CD4-positive, alpha-beta memory T cell (primary cell): ENCODE measurements at regions of chr1 and their contacts with region 1.

Region 1: DNA sequence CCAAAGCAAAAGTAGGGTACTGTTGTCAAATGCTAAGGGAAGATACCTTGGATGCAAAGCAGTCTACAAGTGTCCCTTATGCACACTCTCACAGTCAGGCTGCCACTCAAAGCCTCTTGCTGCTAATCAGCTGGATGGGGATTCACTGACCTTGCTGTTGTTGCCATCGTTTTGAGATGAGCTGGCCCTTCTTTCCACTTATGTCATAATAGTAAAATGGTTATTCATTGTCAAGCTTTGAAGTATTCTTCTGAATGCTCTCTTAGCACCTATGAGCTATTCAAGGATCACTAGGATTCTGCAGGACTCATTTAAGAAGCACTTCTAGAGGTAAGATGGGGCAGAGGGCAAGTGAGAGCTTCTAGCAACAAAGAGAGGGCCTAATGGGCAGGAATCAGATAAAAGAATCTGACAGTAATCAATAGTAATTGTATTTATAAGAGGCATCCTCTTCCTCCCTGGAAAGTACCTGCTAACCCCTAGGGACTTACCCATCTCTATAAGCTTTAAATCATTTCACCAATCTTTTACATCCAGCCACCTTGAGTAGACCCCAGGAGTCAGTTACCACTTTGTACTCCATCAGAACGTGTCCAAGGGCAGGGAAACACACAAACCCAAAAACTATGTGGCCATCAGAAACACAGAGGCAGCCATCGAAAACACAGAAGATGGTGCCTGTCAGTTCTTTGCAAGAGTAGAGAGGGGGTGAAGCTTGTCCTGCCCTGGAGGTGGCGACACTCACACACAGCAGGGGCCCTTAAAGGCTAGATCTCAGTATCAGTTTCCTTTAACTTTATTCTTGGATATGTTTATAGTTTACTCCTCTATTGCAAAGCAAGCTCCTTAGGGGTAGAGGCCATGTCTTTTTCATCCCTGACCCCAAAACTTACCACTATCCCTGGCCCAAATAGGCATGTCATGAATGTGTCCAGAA is 103.7 kb upstream of the NFIA start:
- DNase-seq: peak in 4 of 5 donors; percentile 20 to 34 (median 22)
- H3K4me3 ChIP-seq: no peak overlapping the region
- H3K4me3 Mint-ChIP-seq: no peak overlapping the region
- H3K27ac ChIP-seq: no peak overlapping the region
- H3K27ac Mint-ChIP-seq: no peak overlapping the region
- H3K4me1 ChIP-seq: no peaks in the 10 kb centered on the region
- H3K4me1 Mint-ChIP-seq: no peaks in the 10 kb centered on the region
- H3K27me3 ChIP-seq: no peaks in the 10 kb centered on the region
- H3K27me3 Mint-ChIP-seq: peaks cover 2 to 4% of the 10 kb centered on the region in 2 donors

Region 2: GRCh38 chr1:60989749-60990713 is 11.3 kb after region 1 on chr1:
- CTCF ChIA-PET with region 1: interaction called, 18 read pairs
- POLR2A ChIA-PET with region 1: no interaction called
- intact Hi-C with region 1: no loop called
- DNase-seq: no peak
- H3K4me3 ChIP-seq: no peak overlapping the region
- H3K4me3 Mint-ChIP-seq: no peak overlapping the region
- H3K27ac ChIP-seq: no peak overlapping the region
- H3K27ac Mint-ChIP-seq: no peak overlapping the region
- H3K4me1 ChIP-seq: no peaks in the 10 kb centered on the region
- H3K4me1 Mint-ChIP-seq: no peaks in the 10 kb centered on the region
- H3K27me3 ChIP-seq: no peaks in the 10 kb centered on the region
- H3K27me3 Mint-ChIP-seq: peaks cover 2 to 3% of the 10 kb centered on the region in 2 donors

Region 3: GRCh38 chr1:61028136-61028535 is 49.4 kb after region 1 on chr1:
- CTCF ChIA-PET with region 1: no interaction called
- POLR2A ChIA-PET with region 1: no interaction called
- intact Hi-C with region 1: no loop called
- DNase-seq: no peak
- H3K4me3 ChIP-seq: no peak overlapping the region
- H3K4me3 Mint-ChIP-seq: no peak overlapping the region
- H3K27ac ChIP-seq: no peak overlapping the region
- H3K27ac Mint-ChIP-seq: no peak overlapping the region
- H3K4me1 ChIP-seq: no peaks in the 10 kb centered on the region
- H3K4me1 Mint-ChIP-seq: no peaks in the 10 kb centered on the region
- H3K27me3 ChIP-seq: no peaks in the 10 kb centered on the region
- H3K27me3 Mint-ChIP-seq: no peaks in the 10 kb centered on the region

Region 4: DNA sequence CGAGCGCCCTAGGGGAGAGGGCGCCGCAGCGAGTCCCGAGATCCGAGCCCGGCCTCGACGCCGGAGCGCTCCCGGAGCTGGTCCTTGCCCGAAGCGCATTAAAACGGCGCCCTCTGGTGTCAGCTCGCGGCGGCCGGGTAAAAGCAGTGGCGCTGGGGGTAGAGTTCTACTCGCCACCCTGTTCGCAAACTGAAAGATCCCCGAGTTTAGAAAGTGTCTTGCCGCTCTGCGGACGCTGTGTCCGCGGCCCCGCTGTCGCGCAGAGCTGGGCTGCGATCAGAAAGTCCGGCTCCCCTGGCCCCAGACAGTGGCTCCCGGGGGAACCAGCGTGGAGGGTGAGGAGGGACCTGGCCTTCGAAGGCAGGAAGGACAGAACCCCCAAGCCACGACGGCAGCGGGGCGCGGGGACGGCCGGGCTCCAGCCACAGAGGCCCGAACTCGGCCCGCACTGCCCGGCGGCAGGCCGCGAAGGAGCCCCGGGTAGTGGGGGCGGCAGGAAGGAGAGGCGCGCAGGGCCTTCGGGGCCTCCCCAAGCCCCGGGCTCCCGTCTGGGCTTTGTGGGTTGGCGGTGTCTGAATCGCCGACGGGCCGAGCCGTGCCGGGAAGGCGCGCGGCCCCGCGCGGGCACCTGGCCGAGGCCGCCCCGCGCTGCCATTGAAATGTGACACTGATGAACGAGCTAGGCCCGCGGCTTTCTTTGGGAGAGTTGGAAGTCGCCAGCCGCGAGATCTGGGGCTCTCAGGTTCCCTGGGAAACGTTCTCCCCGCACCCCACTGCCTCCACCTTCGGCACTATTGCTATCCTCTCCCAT is 64.5 kb after region 1 on chr1:
- CTCF ChIA-PET with region 1: interaction called, 12 read pairs
- POLR2A ChIA-PET with region 1: no interaction called
- intact Hi-C with region 1: no loop called
- DNase-seq: peak; percentile 73 to 81 (median 76)
- H3K4me3 ChIP-seq: peak overlapping the region in 1 of 2 donors; percentile 43
- H3K4me3 Mint-ChIP-seq: peak overlapping the region; percentile 74 to 88 (median 82)
- H3K27ac ChIP-seq: no peak overlapping the region
- H3K27ac Mint-ChIP-seq: peak overlapping the region in 1 of 7 donors; percentile 48
- H3K4me1 ChIP-seq: peaks cover 6% of the 10 kb centered on the region
- H3K4me1 Mint-ChIP-seq: peaks cover 0 to 7% (median under 1%) of the 10 kb centered on the region in 4 donors
- H3K27me3 ChIP-seq: no peaks in the 10 kb centered on the region
- H3K27me3 Mint-ChIP-seq: peaks cover 20 to 25% of the 10 kb centered on the region in 2 donors

Region 5: DNA sequence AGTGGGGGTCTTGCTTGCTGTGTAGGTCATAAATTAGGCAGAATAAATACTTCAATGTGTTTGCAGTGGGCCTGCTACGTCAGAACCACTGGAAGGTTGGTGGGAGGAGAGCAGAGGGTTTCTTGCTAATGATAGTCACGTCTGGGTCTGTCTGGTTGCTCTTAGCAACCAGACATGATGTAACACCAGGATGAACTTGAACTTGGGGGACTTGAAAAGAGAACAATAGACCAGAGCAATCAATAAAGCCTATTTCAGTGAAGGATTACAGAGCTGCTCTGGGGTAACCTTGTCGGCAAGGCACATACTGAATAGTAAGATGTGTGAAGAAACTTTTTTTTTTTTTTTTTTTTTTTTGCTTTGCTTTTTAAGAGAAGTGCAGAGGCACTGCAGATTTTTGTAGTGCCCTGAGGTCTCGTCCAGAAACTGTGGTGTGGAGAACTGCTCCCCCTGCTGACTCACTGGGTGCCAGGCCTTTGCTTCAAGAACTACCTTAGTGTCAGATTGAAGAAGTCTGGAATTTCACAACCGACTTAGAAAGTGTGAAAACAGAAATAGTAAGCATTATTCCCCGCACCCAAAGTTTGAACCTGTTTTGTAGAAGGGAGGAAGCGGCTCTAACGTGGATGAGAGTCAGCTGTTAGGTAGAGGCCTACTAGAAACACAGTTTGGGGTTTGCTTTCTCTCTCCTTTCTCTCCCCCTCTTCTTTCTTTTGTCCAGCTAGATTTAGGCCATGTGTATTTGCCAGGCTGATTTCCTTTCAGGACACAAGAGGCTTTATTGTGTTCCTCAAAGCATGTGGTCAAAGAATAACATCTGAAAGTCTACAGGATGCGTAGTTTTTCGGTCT is 474.6 kb after region 1 on chr1:
- CTCF ChIA-PET with region 1: interaction called, 11 read pairs
- POLR2A ChIA-PET with region 1: no interaction called
- intact Hi-C with region 1: loop called (anchors 1 kb)
- DNase-seq: peak; percentile 58 to 72 (median 63)
- H3K4me3 ChIP-seq: no peak overlapping the region
- H3K4me3 Mint-ChIP-seq: peak overlapping the region in 2 of 8 donors; percentile 11 to 26
- H3K27ac ChIP-seq: no peak overlapping the region
- H3K27ac Mint-ChIP-seq: peak overlapping the region; percentile 32 to 91 (median 81)
- H3K4me1 ChIP-seq: no peaks in the 10 kb centered on the region
- H3K4me1 Mint-ChIP-seq: peaks cover 5 to 7% (median 5%) of the 10 kb centered on the region in 4 donors
- H3K27me3 ChIP-seq: no peaks in the 10 kb centered on the region
- H3K27me3 Mint-ChIP-seq: no peaks in the 10 kb centered on the region